WTC11 (cell line): ENCODE measurements at regions of chr1 and their contacts with region 1.

Region 1: DNA sequence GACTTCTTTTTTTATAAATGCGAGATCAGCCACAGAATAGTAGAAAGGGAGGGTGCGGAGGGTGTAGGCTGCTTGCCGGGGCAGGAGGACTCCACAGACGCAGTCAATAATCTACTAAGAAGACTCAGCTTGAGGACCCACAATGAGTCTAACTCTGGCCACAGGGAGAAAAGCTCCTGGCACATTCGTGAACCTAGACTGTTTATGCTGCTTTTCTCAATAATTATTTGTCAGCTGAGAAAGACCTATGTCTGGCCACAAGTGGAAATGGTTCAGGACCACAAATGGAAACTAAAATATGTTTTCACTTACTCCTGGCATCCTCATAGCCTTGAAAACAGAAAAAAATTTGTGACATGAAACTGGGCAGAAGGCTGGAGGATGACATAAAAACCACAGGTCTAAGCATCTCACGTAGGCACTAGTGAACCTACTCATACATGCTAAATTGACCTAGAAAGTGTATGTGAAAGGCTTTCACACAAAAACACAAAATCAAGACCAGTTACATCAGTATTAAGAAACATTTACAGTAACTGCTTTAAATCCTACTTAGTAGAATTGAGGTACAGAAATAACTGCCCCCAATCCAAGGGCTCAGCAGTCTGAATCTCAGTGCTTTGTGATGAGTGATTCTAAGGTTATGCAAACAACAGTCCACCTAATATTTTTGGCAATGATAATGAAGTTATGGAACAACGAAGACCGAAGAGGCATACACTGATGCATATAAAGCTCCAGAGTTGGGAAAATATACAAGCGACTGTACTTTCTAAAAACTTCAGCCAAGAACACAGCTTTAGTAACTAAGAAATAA is 159.5 kb downstream of the SLC45A1 start:
- DNase-seq: no peak
- ATAC-seq: no peak
- H3K4me3 Mint-ChIP-seq: no peak overlapping the region
- H3K27ac Mint-ChIP-seq: peak overlapping the region; percentile 61; the same call in 1 of the 2 replicates
- H3K4me1 Mint-ChIP-seq: peaks cover 62% of the 10 kb centered on the region
- H3K27me3 Mint-ChIP-seq: no peaks in the 10 kb centered on the region
- CTCF ChIP-seq: no peak

Region 2: DNA sequence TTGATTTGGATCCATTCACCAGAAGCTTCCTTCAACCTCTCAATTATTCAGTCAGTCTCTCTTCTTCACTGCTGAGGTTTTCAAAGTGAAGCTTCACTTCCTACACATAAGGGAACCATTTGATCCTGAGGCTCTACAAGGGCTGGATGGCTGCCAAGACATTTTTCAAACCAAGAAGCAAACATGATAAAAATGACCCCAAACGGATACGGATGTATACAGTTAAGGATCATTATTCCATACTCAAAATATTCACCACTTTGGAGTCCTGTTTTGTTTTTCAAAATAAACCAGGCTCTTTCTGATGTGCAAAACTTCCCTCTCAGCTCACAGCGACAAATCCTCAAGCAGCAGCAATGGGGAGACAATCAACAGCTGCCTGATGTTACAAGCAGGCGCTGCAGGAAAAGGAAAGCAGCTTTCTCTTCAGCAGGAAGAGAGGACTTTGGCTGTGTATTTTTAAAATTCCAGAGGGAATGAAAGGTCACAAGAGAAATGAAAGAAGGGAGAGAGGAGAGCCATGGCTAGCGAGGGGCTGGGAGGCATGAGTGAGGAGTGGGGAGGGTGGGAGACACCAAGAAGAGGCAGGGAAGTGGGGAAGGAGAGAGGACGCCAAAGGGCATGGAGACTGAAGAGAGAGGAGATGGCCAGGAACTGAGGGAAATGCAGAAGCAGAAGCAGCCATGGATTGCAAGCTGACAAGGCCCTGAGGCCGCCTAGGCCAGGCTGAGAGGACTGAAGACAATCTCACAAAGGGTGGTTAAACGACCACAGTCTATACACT is 14.0 kb before region 1 on chr1:
- CTCF ChIA-PET with region 1: interaction called, 11 read pairs
- POLR2A ChIA-PET with region 1: no interaction called
- DNase-seq: no peak
- ATAC-seq: 0 out of 2 replicates have a peak, but pooled peaks have one; percentile 5
- H3K4me3 Mint-ChIP-seq: peak overlapping the region; percentile 11; the same call in 1 of the 2 replicates
- H3K27ac Mint-ChIP-seq: peak overlapping the region; percentile 96
- H3K4me1 Mint-ChIP-seq: peaks cover 81% of the 10 kb centered on the region
- H3K27me3 Mint-ChIP-seq: no peaks in the 10 kb centered on the region
- CTCF ChIP-seq: no peak

Region 3: DNA sequence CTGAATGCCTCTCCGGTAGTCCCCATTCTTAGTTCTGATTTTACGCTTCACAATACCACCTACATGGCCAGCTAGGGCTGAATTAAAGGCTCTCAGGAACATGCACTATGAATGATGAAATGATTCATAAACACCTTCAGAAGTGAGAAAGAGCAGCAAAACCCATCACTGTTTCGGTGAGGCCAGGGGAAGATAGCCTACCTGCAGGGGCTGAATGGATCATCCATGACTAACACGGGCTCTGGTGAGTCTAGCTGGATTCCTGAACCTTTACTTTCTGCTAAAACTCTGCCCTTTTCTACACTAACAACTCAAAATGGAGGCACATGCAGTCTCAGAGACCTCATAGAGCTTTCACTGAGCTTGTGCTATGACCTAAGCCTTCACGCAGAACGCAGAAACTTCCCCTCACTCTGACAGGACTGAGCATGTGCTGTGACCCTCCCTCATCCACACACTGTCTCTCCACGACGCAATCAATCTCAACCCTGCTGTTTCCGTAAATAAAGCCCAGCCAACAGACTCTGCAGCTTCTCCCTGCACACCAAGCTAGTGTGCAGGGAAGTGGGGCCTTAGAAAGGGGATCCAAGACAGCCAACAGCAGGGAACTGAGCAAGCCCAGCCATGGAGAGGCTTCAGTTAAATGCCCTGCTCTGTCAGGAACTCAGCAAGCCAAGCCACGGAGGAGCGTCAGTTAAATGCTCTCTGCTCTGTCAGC is 48.3 kb after region 1 on chr1:
- CTCF ChIA-PET with region 1: no interaction called
- POLR2A ChIA-PET with region 1: no interaction called
- DNase-seq: peak; percentile 30
- ATAC-seq: peak; percentile 67
- H3K4me3 Mint-ChIP-seq: no peak overlapping the region
- H3K27ac Mint-ChIP-seq: no peak overlapping the region
- H3K4me1 Mint-ChIP-seq: peaks cover 21% of the 10 kb centered on the region
- H3K27me3 Mint-ChIP-seq: no peaks in the 10 kb centered on the region
- CTCF ChIP-seq: no peak